ENCODE measurements at regions of chr6 and their contacts with region 1.

Region 1: DNA sequence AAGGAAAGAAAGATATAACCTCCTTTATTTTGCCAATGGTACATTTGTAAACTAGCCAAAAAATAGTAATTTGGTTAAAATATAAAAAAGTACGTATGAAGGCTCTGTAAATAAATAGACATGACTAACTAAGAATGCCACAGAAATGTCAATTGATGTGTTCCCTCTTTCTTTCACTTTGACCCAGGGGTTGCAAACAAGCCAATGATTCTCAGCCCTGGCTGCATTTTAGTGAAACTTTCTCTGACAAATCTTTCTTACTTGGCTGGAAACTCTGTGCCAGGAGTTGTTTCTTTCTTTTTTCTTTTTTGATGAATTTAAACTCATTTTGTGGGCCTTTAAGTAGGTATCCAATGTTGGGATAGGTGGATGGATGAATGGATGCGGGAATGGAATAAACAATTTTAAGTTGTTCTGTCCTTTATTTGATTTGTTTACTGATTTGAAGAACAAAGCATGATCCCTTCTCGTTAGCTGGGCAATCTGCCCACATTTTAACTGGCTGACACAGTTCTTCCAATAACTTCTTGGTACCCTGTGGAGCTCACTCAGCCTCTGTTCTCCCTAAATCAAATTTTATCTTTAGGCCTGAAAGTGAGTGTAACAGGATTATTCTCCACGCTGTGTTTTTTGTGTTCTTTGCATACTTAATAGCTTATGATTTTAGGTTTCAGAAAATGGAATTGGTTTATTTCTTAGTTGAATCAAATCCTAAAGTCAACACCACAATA is 58.6 kb upstream of the GCLC start:
- DNase-seq: peak; percentile 47
- ATAC-seq: peak; percentile 35; the same call in 1 of the 2 replicates
- H3K4me3 ChIP-seq: no peak overlapping the region
- H3K27ac ChIP-seq: no peak overlapping the region
- H3K4me1 ChIP-seq: no peaks in the 10 kb centered on the region
- H3K27me3 ChIP-seq: no peaks in the 10 kb centered on the region
- CTCF ChIP-seq: no peak
- POLR2A ChIP-seq: no peak
- RAD21 ChIP-seq: no peak

Region 2: GRCh38 chr6:52893803-52894649 is 709.5 kb before region 1 on chr6:
- CTCF ChIA-PET with region 1: no interaction called
- POLR2A ChIA-PET with region 1: no interaction called
- dilution Hi-C with region 1: no loop called
- in situ Hi-C with region 1: no loop called
- intact Hi-C with region 1: no loop called
- DNase-seq: no peak
- ATAC-seq: no peak
- H3K4me3 ChIP-seq: no peak overlapping the region
- H3K27ac ChIP-seq: no peak overlapping the region
- H3K4me1 ChIP-seq: no peaks in the 10 kb centered on the region
- H3K27me3 ChIP-seq: peaks cover 4% of the 10 kb centered on the region
- CTCF ChIP-seq: no peak
- POLR2A ChIP-seq: no peak
- RAD21 ChIP-seq: no peak

Region 3: GRCh38 chr6:53556986-53557715 is 46.4 kb before region 1 on chr6:
- CTCF ChIA-PET with region 1: no interaction called
- POLR2A ChIA-PET with region 1: no interaction called
- dilution Hi-C with region 1: no loop called
- in situ Hi-C with region 1: no loop called
- intact Hi-C with region 1: loop called (anchors 5 kb)
- DNase-seq: no peak
- ATAC-seq: no peak
- H3K4me3 ChIP-seq: no peak overlapping the region
- H3K27ac ChIP-seq: no peak overlapping the region
- H3K4me1 ChIP-seq: no peaks in the 10 kb centered on the region
- H3K27me3 ChIP-seq: no peaks in the 10 kb centered on the region
- CTCF ChIP-seq: no peak
- POLR2A ChIP-seq: no peak
- RAD21 ChIP-seq: no peak

Region 4: GRCh38 chr6:54935739-54936138 is 1332.2 kb after region 1 on chr6:
- CTCF ChIA-PET with region 1: no interaction called
- POLR2A ChIA-PET with region 1: no interaction called
- dilution Hi-C with region 1: no loop called
- in situ Hi-C with region 1: no loop called
- intact Hi-C with region 1: no loop called
- DNase-seq: peak; percentile 87
- ATAC-seq: 0 out of 2 replicates have a peak, but pooled peaks have one; percentile 24
- H3K4me3 ChIP-seq: no peak overlapping the region
- H3K27ac ChIP-seq: no peak overlapping the region
- H3K4me1 ChIP-seq: no peaks in the 10 kb centered on the region
- H3K27me3 ChIP-seq: no peaks in the 10 kb centered on the region
- CTCF ChIP-seq: no peak
- POLR2A ChIP-seq: no peak
- RAD21 ChIP-seq: no peak

Measured in IMR-90 (cell line).